AG04450 (cell line): ENCODE measurements at regions of chr20 and their contacts with region 1.

Region 1: DNA sequence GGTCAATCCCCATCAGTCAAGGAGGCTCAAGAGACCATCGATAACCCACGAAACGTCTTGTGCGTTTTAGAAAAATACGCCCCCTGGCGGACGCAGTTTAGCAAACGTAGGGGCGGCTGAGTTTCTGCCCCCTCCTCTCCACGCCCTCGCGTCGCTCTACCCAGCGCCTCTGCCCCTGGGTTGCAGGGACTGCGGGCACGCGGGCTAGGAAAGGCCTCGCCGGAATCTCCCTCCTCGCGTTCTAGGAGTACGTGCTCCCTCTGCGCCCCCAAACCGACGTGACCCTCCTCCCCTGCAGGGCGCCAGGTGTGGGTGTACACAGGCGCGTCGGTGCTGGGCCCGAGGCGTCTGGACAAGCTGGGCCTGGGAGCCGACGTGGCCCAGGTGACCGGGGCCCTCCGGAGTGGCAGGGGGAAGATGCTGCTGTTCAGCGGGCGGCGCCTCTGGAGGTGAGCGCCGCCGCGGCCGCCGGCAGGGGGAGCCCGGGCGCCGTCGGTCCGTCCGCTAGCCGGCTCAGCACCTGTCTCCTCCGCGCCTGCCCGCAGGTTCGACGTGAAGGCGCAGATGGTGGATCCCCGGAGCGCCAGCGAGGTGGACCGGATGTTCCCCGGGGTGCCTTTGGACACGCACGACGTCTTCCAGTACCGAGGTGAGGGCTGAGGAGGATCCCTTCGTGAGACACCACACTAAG is 5.3 kb downstream of the MMP9 start:
- DNase-seq: no peak
- H3K4me3 ChIP-seq: 0 out of 2 replicates have a peak overlapping the region, but pooled peaks have one; percentile 7
- H3K27ac ChIP-seq: no peak overlapping the region
- H3K27me3 ChIP-seq: peaks cover 74% of the 10 kb centered on the region
- CTCF ChIP-seq: peak; percentile 63

Region 2: GRCh38 chr20:45742581-45742980 is 271.4 kb before region 1 on chr20:
- CTCF ChIA-PET with region 1: no interaction called
- POLR2A ChIA-PET with region 1: no interaction called
- DNase-seq: no peak
- H3K4me3 ChIP-seq: no peak overlapping the region
- H3K27ac ChIP-seq: no peak overlapping the region
- H3K27me3 ChIP-seq: peaks cover 5% of the 10 kb centered on the region
- CTCF ChIP-seq: no peak

Region 3: DNA sequence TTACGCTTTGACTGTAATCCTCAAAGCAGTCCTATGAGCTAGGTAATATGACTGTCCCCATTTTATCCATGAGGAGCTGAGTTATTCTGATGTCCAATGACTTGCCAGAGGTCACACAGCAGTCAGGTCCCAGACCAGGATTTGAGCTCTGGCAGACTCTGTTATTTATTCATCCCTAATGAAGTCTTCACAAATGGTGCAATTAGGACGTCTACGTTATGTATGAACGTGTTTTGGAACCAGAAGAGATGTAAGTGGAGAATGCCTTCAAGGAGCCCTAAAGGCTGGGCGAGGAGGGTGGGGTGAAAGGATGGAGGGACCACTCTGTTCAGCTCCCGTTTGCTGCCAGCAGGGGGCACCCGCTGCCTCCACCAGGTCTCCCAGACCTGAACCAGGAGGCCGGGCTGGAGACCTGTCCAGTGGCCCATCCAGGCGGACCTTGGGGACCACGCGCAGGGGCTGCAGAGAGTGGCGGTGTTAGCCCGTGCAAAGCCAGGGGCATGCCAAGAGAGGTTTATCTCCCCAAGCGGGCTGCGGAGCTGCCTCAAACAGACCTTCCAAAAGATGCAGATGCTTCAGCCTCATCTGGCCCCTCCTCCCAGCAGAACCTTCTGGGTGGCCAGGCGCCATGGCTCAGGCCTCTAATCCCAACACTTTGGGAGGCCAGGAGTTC is 26.7 kb before region 1 on chr20:
- CTCF ChIA-PET with region 1: interaction called, 15 read pairs
- POLR2A ChIA-PET with region 1: no interaction called
- DNase-seq: no peak
- H3K4me3 ChIP-seq: no peak overlapping the region
- H3K27ac ChIP-seq: no peak overlapping the region
- H3K27me3 ChIP-seq: peaks cover 14% of the 10 kb centered on the region
- CTCF ChIP-seq: peak; percentile 80

Region 4: DNA sequence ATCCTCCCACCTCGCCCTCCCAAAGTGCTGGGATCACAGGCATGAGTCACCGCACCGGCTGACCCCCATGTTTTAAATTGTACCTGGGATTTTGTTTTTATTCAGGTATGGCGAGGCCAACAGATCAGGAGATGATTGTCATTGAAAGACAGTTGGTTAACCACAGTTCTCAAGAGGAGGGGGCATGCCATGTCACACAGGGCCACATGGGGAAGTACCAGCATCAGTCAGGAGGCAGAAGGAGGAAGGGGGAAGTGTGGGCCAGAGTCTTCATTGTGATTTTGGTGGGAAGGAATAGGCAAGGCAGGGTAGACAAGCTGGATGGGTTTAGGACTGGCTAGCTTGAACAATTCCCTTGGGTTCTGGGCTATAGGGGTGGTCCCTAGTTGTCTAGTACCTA is 15.2 kb before region 1 on chr20:
- CTCF ChIA-PET with region 1: interaction called, 29 read pairs
- POLR2A ChIA-PET with region 1: no interaction called
- DNase-seq: no peak
- H3K4me3 ChIP-seq: no peak overlapping the region
- H3K27ac ChIP-seq: no peak overlapping the region
- H3K27me3 ChIP-seq: peaks cover 44% of the 10 kb centered on the region
- CTCF ChIP-seq: no peak

Region 5: DNA sequence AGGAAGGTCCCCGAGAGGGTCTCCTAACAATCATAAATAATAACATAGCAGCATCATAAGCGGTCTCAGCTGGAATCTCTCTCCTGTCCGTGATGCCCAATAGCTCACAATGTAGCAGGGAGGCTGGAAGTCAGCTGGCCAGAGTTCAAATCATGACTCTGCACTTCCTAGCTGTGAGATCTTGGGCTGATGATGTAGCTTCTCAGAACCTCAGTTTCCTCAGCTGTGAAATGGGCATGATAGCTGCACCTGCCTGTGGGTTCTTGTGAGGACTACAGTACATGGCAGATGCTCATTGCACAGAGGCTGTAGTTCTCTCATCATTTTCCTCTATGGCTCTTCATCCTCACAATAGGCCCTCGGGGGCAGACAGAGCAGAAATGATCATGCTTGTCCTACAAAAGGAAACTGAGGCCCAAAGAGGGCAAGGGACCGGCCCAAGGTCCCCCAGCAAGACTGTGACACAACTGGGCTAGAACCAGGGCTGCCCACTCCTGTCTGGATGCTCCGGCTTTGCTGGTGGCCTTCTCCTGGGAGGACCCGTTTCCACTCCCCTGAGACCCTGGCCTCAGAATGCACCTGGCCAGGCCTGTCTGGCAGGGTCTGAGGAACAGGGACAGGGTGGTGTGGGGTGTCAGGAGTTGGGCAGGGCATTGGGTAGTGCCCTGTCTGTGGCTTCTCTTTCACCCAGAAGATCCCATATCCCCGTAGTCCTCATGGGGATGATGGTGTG is 32.8 kb after region 1 on chr20:
- CTCF ChIA-PET with region 1: no interaction called
- POLR2A ChIA-PET with region 1: no interaction called
- DNase-seq: no peak
- H3K4me3 ChIP-seq: no peak overlapping the region
- H3K27ac ChIP-seq: no peak overlapping the region
- H3K27me3 ChIP-seq: peaks cover 12% of the 10 kb centered on the region
- CTCF ChIP-seq: no peak

Region 6: GRCh38 chr20:46057856-46058598 is 44.1 kb after region 1 on chr20:
- CTCF ChIA-PET with region 1: interaction called, 19 read pairs
- POLR2A ChIA-PET with region 1: no interaction called
- DNase-seq: no peak
- H3K4me3 ChIP-seq: peak overlapping the region; percentile 48
- H3K27ac ChIP-seq: no peak overlapping the region
- H3K27me3 ChIP-seq: peaks cover 9% of the 10 kb centered on the region
- CTCF ChIP-seq: peak; percentile 57

Region 7: GRCh38 chr20:46089417-46090388 is 75.7 kb after region 1 on chr20 and contains the start of gene NCOA5:
- CTCF ChIA-PET with region 1: interaction called, 18 read pairs
- POLR2A ChIA-PET with region 1: no interaction called
- DNase-seq: peak; percentile 86
- H3K4me3 ChIP-seq: peak within 1 kb of the TSS; percentile 70
- H3K27ac ChIP-seq: peak within 1 kb of the TSS; percentile 69
- H3K27me3 ChIP-seq: no peaks in the 10 kb centered on the region
- CTCF ChIP-seq: peak; percentile 5; the same call in 1 of the 2 replicates
- polyA plus RNA-seq, gene NCOA5: 21.5 and 27.0 TPM in 2 replicates

Region 8: GRCh38 chr20:46174469-46175128 is 160.6 kb after region 1 on chr20:
- CTCF ChIA-PET with region 1: interaction called, 15 read pairs
- POLR2A ChIA-PET with region 1: no interaction called
- DNase-seq: no peak
- H3K4me3 ChIP-seq: no peak overlapping the region
- H3K27ac ChIP-seq: no peak overlapping the region
- H3K27me3 ChIP-seq: peaks cover 36% of the 10 kb centered on the region
- CTCF ChIP-seq: peak; percentile 49

Region 9: DNA sequence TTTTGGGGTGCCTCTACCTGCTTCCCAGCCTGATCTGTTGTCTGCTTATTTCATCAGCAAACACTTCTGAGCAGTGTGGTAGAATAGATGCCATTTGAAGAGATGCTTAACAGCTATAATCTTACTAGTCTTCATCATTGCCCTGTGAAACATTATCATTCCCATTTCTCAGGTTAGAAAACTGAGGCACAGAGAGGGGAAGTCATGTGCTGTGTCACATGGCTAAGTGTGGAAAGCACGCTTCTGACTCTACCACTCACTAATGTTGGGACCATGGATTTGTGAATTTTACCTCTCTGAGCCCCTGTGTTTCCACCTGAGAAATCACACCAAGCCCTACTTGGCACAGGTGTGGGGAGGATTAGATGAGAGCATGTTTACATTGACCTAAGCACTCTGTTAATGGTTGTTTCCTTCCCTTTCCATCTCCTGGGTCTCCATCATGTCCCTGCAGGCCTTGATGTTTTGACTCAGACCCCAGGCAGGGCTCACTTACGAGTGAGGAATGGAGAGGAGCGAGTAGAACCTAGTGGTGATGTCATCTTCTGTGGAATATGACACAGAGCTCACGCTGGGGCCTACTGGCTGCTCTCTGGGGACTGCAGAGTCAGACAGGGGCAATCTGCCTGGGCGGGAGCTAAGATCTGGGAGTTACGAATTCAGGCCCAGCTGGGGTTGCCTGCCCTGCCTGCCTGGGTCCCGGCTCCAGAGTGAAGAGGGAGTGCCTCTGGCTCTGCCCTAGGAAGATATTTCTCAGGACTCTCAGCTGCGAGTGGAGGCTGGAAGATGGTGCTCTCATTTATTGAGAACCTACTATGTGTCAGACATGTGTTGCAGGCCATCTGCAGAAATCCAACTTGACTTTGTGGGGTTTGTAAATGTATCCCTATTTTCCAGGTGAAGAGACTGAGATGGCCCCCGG is 230.0 kb after region 1 on chr20:
- CTCF ChIA-PET with region 1: no interaction called
- POLR2A ChIA-PET with region 1: no interaction called
- DNase-seq: no peak
- H3K4me3 ChIP-seq: no peak overlapping the region
- H3K27ac ChIP-seq: no peak overlapping the region
- H3K27me3 ChIP-seq: peaks cover 24% of the 10 kb centered on the region
- CTCF ChIP-seq: no peak

Region 10: DNA sequence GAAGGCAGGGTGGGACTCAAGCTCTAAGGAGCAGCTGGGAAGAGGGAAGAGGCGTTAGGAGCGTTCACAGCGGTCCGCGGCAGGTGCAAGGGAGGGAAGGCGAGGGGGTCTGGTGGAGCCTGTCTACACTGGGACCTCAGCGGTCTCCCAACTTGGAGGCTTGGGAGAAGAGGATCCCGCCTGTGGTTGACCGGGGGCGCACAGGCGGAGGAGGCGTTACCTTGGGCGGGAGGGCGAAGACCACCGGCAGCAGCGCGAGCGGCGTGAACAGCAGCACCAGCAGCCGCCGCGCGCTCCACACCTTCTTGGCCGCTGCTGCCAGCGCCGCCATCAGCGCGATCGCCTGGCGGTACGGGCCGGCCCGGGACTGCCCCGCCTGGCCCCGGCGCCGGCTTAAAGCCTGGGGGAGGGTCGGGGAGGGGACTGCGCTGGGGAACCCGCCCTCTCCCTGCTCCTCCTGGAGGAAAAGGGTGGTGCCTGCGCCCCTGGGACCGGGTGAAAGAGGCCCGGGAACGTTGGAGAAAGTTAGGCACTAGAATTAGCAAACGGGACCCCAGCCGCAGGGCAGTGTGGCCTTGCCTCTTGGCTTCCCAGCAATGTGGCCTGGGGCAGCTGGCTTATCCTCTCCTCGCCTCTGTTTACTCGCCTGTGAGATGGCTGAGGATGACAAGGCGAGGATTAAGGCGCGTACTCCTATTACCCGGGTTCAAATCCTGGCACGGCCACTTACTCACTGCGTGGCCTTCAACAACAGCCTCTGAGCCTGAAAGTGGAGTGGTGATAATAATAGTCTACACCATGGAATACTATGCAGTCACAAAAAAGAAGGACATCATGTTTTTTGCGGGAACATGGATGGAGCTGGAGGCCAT is 637.4 kb after region 1 on chr20 and contains the start of gene SLC13A3:
- CTCF ChIA-PET with region 1: no interaction called
- POLR2A ChIA-PET with region 1: no interaction called
- DNase-seq: no peak
- H3K4me3 ChIP-seq: no peak within 1 kb of the TSS
- H3K27ac ChIP-seq: no peak within 1 kb of the TSS
- H3K27me3 ChIP-seq: peaks cover 20% of the 10 kb centered on the region
- CTCF ChIP-seq: no peak
- polyA plus RNA-seq, gene SLC13A3: 2.4 and 3.8 TPM in 2 replicates